Gastrocnemius medialis (tissue), 4 donors: ENCODE measurements at regions of chr3 and their contacts with region 1.

Region 1: GRCh38 chr3:148955544-148956346 is 35.6 kb upstream of the GYG1 start:
- DNase-seq: peak; percentile 39 to 63
- ATAC-seq: peak; percentile 90 to 93
- H3K4me3 ChIP-seq: peak overlapping the region in 1 of 4 donors; percentile 6
- H3K27ac ChIP-seq: peak overlapping the region; percentile 87 to 92 (median 89)
- H3K4me1 ChIP-seq: peaks cover 23 to 28% of the 10 kb centered on the region in 2 donors
- H3K27me3 ChIP-seq: no peaks in the 10 kb centered on the region
- CTCF ChIP-seq: peak; percentile 31 to 67 (median 54)
- POLR2A ChIP-seq: peak in 1 of 2 donors; percentile 21

Region 2: GRCh38 chr3:148697306-148698189 is 258.2 kb before region 1 on chr3 and contains the start of gene AGTR1:
- in situ Hi-C with region 1: no loop called
- intact Hi-C with region 1: no loop called
- DNase-seq: peak; percentile 63 to 78
- ATAC-seq: peak; percentile 81
- H3K4me3 ChIP-seq: peak within 1 kb of the TSS; percentile 45 to 58 (median 48)
- H3K27ac ChIP-seq: peak within 1 kb of the TSS; percentile 48 to 58 (median 52)
- H3K4me1 ChIP-seq: no peaks in the 10 kb centered on the region
- H3K27me3 ChIP-seq: peaks cover 0 to 6% (median 0%) of the 10 kb centered on the region in 3 donors
- CTCF ChIP-seq: no peak
- POLR2A ChIP-seq: peak; percentile 52 to 73
- total RNA-seq, gene AGTR1: 12.7 to 32.1 (median 14.5) TPM

Region 3: GRCh38 chr3:148971401-148972163 is 15.8 kb after region 1 on chr3:
- in situ Hi-C with region 1: no loop called
- intact Hi-C with region 1: loop called (anchors 1 kb)
- DNase-seq: no peak
- ATAC-seq: no peak
- H3K4me3 ChIP-seq: no peak overlapping the region
- H3K27ac ChIP-seq: no peak overlapping the region
- H3K4me1 ChIP-seq: peaks cover 13 to 17% of the 10 kb centered on the region in 2 donors
- H3K27me3 ChIP-seq: no peaks in the 10 kb centered on the region
- CTCF ChIP-seq: no peak
- POLR2A ChIP-seq: no peak

Region 4: GRCh38 chr3:149016669-149017541 is 61.2 kb after region 1 on chr3:
- in situ Hi-C with region 1: loop called in 1 of 4 experiments (anchors 10 kb)
- intact Hi-C with region 1: loop called (anchors 2 kb)
- DNase-seq: peak in 1 of 2 donors; percentile 45
- ATAC-seq: peak; percentile 73 to 76
- H3K4me3 ChIP-seq: peak overlapping the region in 1 of 4 donors; percentile 5
- H3K27ac ChIP-seq: peak overlapping the region; percentile 98 to 100 (median 100)
- H3K4me1 ChIP-seq: peaks cover 85 to 88% of the 10 kb centered on the region in 2 donors
- H3K27me3 ChIP-seq: no peaks in the 10 kb centered on the region
- CTCF ChIP-seq: no peak
- POLR2A ChIP-seq: peak in 1 of 2 donors; percentile 67

Region 5: DNA sequence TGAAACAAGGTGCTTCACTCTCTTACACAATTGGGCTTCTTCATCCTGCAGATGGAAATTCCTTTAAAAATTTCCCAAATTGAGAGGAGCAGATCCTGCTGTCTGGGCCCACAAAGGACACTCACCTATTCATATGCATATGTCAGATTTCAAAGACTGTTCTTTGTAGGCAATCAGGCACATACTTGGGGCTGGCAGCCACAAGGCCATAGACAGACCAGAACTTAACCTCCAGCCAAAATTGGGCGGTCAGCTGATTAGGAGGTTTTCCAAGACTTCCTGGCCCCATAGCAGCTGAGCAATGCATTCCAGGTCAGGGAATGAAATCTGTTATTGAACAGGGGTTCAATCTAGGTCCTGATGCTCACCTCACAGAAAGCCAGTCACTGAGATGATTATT is 158.7 kb after region 1 on chr3:
- in situ Hi-C with region 1: loop called in 2 of 4 experiments (anchors 10 kb)
- intact Hi-C with region 1: no loop called
- DNase-seq: no peak
- ATAC-seq: no peak
- H3K4me3 ChIP-seq: no peak overlapping the region
- H3K27ac ChIP-seq: no peak overlapping the region
- H3K4me1 ChIP-seq: no peaks in the 10 kb centered on the region
- H3K27me3 ChIP-seq: no peaks in the 10 kb centered on the region
- CTCF ChIP-seq: no peak
- POLR2A ChIP-seq: no peak

Region 6: DNA sequence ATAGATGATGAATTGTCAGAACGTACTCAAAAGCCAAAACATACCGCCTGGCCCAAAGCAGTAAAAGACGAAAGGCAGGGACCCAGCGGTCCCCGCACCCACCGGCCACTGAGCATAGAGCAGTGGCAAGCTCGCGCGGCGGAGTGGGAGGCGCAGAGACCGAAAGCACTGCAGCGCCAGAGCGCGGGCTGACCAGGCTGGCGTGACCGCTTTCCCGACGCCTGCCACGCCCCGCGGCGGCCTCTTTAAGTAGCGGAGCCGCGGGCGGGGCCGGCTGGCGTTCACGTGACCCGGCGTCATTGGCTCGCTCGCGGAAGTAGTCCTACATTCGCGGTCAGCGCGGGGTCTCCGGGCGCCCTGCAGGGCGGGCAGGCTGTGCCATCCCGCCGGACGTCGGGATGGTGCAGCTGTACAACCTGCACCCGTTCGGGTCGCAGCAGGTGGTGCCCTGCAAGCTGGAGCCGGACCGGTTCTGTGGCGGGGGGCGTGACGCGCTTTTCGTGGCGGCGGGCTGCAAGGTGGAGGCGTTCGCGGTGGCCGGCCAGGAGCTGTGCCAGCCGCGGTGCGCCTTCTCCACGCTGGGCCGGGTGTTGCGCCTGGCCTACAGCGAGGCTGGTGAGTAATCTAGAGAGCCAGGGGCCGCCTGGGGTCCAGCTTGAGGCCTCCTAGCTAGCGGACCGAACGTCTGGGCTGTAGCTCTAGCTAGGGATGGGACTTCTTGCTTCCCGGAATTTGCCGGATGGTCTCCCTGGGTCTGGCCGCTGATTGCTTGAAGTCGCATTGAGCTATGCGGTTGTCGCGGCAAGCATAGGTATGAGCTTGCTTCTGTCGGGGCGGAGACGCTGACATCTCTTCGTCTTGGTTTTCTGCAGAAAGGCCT is 173.8 kb after region 1 on chr3 and contains the start of gene HPS3:
- in situ Hi-C with region 1: loop called in 2 of 4 experiments (anchors 10 kb)
- intact Hi-C with region 1: loop called (anchors 2 kb)
- DNase-seq: peak; percentile 83 to 85
- ATAC-seq: peak; percentile 91 to 95
- H3K4me3 ChIP-seq: peak within 1 kb of the TSS; percentile 68 to 82 (median 76)
- H3K27ac ChIP-seq: peak within 1 kb of the TSS; percentile 74 to 79 (median 74)
- H3K4me1 ChIP-seq: peaks cover 17 to 22% of the 10 kb centered on the region in 2 donors
- H3K27me3 ChIP-seq: no peaks in the 10 kb centered on the region
- CTCF ChIP-seq: peak in 2 of 5 experiments; percentile 19 to 28
- POLR2A ChIP-seq: peak; percentile 82 to 97
- total RNA-seq, gene HPS3: 3.1 to 5.5 (median 4.4) TPM

Region 7: DNA sequence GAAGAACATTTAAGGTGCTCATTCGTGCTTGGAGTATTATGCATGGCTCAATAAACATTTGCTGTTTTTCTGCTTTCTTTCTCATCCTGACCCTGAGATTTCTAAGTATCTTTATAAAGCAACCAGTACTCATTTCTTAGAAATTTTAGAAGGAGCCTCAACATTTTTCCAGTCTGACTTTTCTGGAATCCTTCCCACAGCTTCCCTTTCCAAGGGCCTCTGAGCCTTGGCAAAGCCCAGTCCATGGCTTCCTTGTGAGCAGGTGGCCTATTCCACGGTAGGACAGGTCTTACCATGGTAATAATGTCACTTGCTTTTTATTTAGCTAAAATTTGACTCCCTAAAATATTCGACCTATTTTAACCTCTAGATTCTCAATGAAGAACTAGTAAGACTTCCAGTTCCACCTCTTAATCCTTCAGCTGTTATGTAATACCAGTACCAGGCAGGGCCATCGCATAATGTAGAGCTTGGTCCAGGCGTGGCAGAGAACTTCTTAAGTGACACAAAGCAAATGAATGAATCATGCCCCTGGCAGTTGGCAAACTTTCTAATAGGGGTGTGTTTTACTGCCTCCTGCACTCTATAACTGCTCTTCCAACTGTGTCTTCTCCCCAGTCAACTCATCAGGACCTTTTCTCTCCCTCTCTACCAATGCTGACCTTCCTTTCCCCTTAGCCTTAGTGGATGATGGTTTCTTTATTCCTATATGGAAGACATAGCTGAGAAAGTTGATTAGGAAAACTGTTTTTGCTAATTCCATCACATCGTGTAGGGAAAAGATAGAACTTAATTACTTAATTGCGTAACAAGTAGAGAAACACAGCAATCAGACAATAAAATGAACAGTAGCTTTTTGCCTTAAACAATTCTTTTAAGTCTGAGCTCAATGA is 517.9 kb after region 1 on chr3:
- in situ Hi-C with region 1: loop called in 3 of 4 experiments (anchors 25 kb)
- intact Hi-C with region 1: loop called (anchors 10 kb)
- DNase-seq: peak; percentile 83 to 86
- ATAC-seq: peak; percentile 97 to 98
- H3K4me3 ChIP-seq: no peak overlapping the region
- H3K27ac ChIP-seq: peak overlapping the region; percentile 35 to 79 (median 69)
- H3K4me1 ChIP-seq: peaks cover 19 to 21% of the 10 kb centered on the region in 2 donors
- H3K27me3 ChIP-seq: no peaks in the 10 kb centered on the region
- CTCF ChIP-seq: no peak
- POLR2A ChIP-seq: no peak